HepG2 (cell line): ENCODE measurements at regions of chr18 and their contacts with region 1.

Region 1: DNA sequence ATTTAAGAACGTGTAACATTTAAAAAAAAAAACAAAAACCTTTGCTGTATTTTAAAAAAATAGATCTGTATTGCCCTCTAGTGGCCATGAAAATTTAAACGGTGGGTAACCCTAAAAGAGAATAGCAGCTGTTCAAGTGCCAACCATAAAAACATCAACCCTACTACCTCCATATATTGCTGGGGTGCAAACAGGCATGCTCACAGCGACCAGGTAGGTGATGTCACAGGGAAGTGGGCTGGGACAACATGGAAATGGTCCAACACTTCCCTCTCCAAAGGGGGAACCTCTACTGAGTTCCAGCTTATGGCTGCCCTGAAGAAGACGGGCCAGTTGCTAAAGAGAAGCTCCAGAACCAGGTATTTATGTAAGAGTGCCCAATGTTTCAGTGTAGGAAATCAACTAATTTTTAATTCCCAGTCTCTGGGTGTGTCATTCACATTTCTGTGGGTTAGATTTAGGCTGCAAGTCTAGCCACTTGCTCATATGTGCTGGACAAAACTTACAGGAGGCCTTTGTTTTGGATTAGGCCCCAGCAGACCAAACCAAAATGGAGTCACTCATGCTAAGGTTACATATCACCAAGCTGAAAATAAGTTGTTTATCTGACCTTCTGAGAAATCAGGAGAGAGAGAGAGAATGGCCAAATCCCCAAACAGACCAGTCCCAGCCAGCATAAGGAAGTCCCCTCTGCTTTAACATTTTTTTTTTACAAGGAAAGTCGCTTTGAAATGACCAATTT is 54.5 kb downstream of the SKA1 start:
- DNase-seq: peak; percentile 18
- ATAC-seq: no peak
- H3K4me3 ChIP-seq: no peak overlapping the region
- H3K27ac ChIP-seq: no peak overlapping the region
- H3K4me1 ChIP-seq: peaks cover 20% of the 10 kb centered on the region; the same call in 1 of the 2 replicates
- H3K27me3 ChIP-seq: no peaks in the 10 kb centered on the region
- CTCF ChIP-seq: peak; percentile 46
- EP300 ChIP-seq: no peak
- POLR2A ChIP-seq: no peak
- RAD21 ChIP-seq: no peak

Region 2: GRCh38 chr18:49967171-49967570 is 462.2 kb before region 1 on chr18:
- CTCF ChIA-PET with region 1: no interaction called
- POLR2A ChIA-PET with region 1: no interaction called
- in situ Hi-C with region 1: no loop called
- intact Hi-C with region 1: loop called (anchors 5 kb)
- DNase-seq: peak; percentile 93
- ATAC-seq: peak; percentile 94
- H3K4me3 ChIP-seq: peak overlapping the region; percentile 22 to 60 (median 35); a peak in 5 of 6 replicates
- H3K27ac ChIP-seq: peak overlapping the region; percentile 76
- H3K4me1 ChIP-seq: peaks cover 44% of the 10 kb centered on the region
- H3K27me3 ChIP-seq: no peaks in the 10 kb centered on the region
- CTCF ChIP-seq: no peak
- EP300 ChIP-seq: peak in 1 of 2 experiments; percentile 53; a peak in 2 of 4 replicates
- POLR2A ChIP-seq: no peak
- RAD21 ChIP-seq: no peak

Region 3: GRCh38 chr18:50151926-50152325 is 277.5 kb before region 1 on chr18:
- CTCF ChIA-PET with region 1: no interaction called
- POLR2A ChIA-PET with region 1: no interaction called
- in situ Hi-C with region 1: no loop called
- intact Hi-C with region 1: no loop called
- DNase-seq: no peak
- ATAC-seq: no peak
- H3K4me3 ChIP-seq: no peak overlapping the region
- H3K27ac ChIP-seq: no peak overlapping the region
- H3K4me1 ChIP-seq: peaks cover 18% of the 10 kb centered on the region
- H3K27me3 ChIP-seq: no peaks in the 10 kb centered on the region
- CTCF ChIP-seq: no peak
- EP300 ChIP-seq: no peak
- POLR2A ChIP-seq: no peak
- RAD21 ChIP-seq: no peak

Region 4: GRCh38 chr18:50218432-50219197 is 210.8 kb before region 1 on chr18:
- CTCF ChIA-PET with region 1: interaction called, 18 read pairs
- POLR2A ChIA-PET with region 1: no interaction called
- in situ Hi-C with region 1: loop called (anchors 5 kb)
- intact Hi-C with region 1: loop called (anchors 1 kb)
- DNase-seq: peak; percentile 45
- ATAC-seq: peak; percentile 88
- H3K4me3 ChIP-seq: no peak overlapping the region
- H3K27ac ChIP-seq: no peak overlapping the region
- H3K4me1 ChIP-seq: no peaks in the 10 kb centered on the region
- H3K27me3 ChIP-seq: no peaks in the 10 kb centered on the region
- CTCF ChIP-seq: peak; percentile 70
- EP300 ChIP-seq: no peak
- POLR2A ChIP-seq: no peak
- RAD21 ChIP-seq: peak; percentile 28

Region 5: GRCh38 chr18:50287441-50288347 is 141.7 kb before region 1 on chr18 and contains the start of gene CXXC1:
- CTCF ChIA-PET with region 1: no interaction called
- POLR2A ChIA-PET with region 1: no interaction called
- in situ Hi-C with region 1: loop called (anchors 10 kb)
- intact Hi-C with region 1: loop called (anchors 5 kb)
- DNase-seq: peak; percentile 98
- ATAC-seq: peak; percentile 96
- H3K4me3 ChIP-seq: peak within 1 kb of the TSS; percentile 88 to 93 (median 90)
- H3K27ac ChIP-seq: peak within 1 kb of the TSS; percentile 59
- H3K4me1 ChIP-seq: peaks cover 16% of the 10 kb centered on the region
- H3K27me3 ChIP-seq: peaks cover 0 to 4% of the 10 kb centered on the region in 2 experiments; a peak in 2 of 5 replicates
- CTCF ChIP-seq: peak; percentile 78
- EP300 ChIP-seq: no peak; a peak in 1 of 4 replicates
- POLR2A ChIP-seq: peak in 1 of 2 experiments; percentile 41; a peak in 2 of 4 replicates
- RAD21 ChIP-seq: peak; percentile 29; the same call in 1 of the 2 replicates
- total RNA-seq, gene CXXC1: 29.8 and 32.9 TPM in 2 replicates

Region 6: GRCh38 chr18:50356036-50356945 is 73.1 kb before region 1 on chr18:
- CTCF ChIA-PET with region 1: interaction called, 11 read pairs
- POLR2A ChIA-PET with region 1: no interaction called
- in situ Hi-C with region 1: no loop called
- intact Hi-C with region 1: loop called (anchors 5 kb)
- DNase-seq: peak; percentile 11
- ATAC-seq: peak; percentile 97
- H3K4me3 ChIP-seq: no peak overlapping the region
- H3K27ac ChIP-seq: no peak overlapping the region
- H3K4me1 ChIP-seq: peaks cover 15% of the 10 kb centered on the region
- H3K27me3 ChIP-seq: peaks cover 2 to 4% of the 10 kb centered on the region in 2 experiments; a peak in 3 of 5 replicates
- CTCF ChIP-seq: peak; percentile 22
- EP300 ChIP-seq: no peak
- POLR2A ChIP-seq: no peak
- RAD21 ChIP-seq: no peak

Region 7: GRCh38 chr18:50638884-50639420 is 209.6 kb after region 1 on chr18:
- CTCF ChIA-PET with region 1: no interaction called
- POLR2A ChIA-PET with region 1: no interaction called
- in situ Hi-C with region 1: no loop called
- intact Hi-C with region 1: no loop called
- DNase-seq: no peak
- ATAC-seq: no peak
- H3K4me3 ChIP-seq: no peak overlapping the region
- H3K27ac ChIP-seq: no peak overlapping the region
- H3K4me1 ChIP-seq: no peaks in the 10 kb centered on the region
- H3K27me3 ChIP-seq: no peaks in the 10 kb centered on the region
- CTCF ChIP-seq: no peak
- EP300 ChIP-seq: no peak
- POLR2A ChIP-seq: no peak
- RAD21 ChIP-seq: no peak